ENCODE measurements at regions of chr9 and their contacts with region 1.

Region 1: DNA sequence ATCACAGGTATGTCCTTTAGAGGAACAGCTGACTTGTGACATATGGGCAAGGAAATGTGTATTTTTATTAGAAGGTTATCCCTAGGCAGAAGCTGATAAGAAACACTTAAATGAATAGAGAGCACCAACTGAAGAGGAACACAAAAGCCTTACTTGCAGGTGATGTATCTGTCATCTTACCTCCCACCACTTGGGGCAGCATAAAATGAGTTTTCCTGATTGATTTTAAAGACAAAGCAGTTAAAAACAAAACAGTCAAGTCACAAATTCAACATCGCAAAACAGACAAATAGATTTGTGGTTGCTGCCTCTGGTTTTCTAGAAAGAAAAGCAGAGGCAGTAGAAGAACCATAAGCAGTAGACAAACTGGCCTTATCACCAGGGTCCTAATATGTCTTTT is 302.4 kb upstream of the ZNF462 start:
- DNase-seq: no peak
- H3K4me3 ChIP-seq: no peak overlapping the region
- H3K27ac ChIP-seq: no peak overlapping the region
- H3K4me1 ChIP-seq: no peaks in the 10 kb centered on the region
- H3K27me3 ChIP-seq: no peaks in the 10 kb centered on the region
- CTCF ChIP-seq: no peak
- POLR2A ChIP-seq: no peak

Region 2: GRCh38 chr9:105656131-105656921 is 904.2 kb before region 1 on chr9:
- intact Hi-C with region 1: loop called (anchors 5 kb)
- DNase-seq: no peak
- H3K4me3 ChIP-seq: peak overlapping the region; percentile 36 to 73 (median 49)
- H3K27ac ChIP-seq: no peak overlapping the region
- H3K4me1 ChIP-seq: no peaks in the 10 kb centered on the region
- H3K27me3 ChIP-seq: peaks cover 0 to 24% of the 10 kb centered on the region in 2 donors
- CTCF ChIP-seq: no peak
- POLR2A ChIP-seq: no peak

Region 3: DNA sequence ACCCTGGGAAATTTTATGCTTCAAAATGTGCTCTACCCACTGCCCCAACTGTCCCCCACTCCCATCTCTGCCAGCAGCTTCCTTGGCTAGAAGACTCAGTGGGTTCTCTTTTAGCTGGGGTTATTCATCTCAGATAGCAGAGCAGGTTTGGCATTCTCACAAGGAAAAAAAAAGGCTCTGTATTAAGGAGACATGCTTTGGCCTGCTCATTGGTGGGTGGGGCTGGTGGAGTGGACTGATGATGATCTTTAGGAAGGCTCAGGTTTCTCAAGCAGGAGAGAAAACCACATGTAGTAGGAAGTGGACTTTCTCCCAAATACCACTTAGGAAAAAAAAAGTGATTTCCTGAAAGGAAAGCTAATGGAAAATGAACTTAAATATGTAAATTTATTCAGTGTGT is 23.2 kb after region 1 on chr9:
- intact Hi-C with region 1: loop called (anchors 2 kb)
- DNase-seq: no peak
- H3K4me3 ChIP-seq: no peak overlapping the region
- H3K27ac ChIP-seq: no peak overlapping the region
- H3K4me1 ChIP-seq: no peaks in the 10 kb centered on the region
- H3K27me3 ChIP-seq: no peaks in the 10 kb centered on the region
- CTCF ChIP-seq: no peak
- POLR2A ChIP-seq: no peak